ENCODE measurements at regions of chr19 and their contacts with region 1.

Region 1: GRCh38 chr19:16247353-16248182 is 49.9 kb downstream of the AP1M1 start:
- DNase-seq: peak; percentile 70 to 94 (median 84)
- ATAC-seq: peak; percentile 80
- H3K4me3 ChIP-seq: no peak overlapping the region
- H3K4me3 Mint-ChIP-seq: peak overlapping the region; percentile 60
- H3K27ac ChIP-seq: no peak overlapping the region
- H3K27ac Mint-ChIP-seq: peak overlapping the region; percentile 82
- H3K4me1 ChIP-seq: peaks cover 48% of the 10 kb centered on the region
- H3K4me1 Mint-ChIP-seq: peaks cover 32% of the 10 kb centered on the region
- H3K27me3 ChIP-seq: no peaks in the 10 kb centered on the region
- H3K27me3 Mint-ChIP-seq: no peaks in the 10 kb centered on the region
- CTCF ChIP-seq: peak; percentile 95

Region 2: GRCh38 chr19:15954820-15955219 is 292.7 kb before region 1 on chr19:
- CTCF ChIA-PET with region 1: no interaction called
- POLR2A ChIA-PET with region 1: no interaction called
- intact Hi-C with region 1: no loop called
- DNase-seq: no peak
- ATAC-seq: no peak
- H3K4me3 ChIP-seq: no peak overlapping the region
- H3K4me3 Mint-ChIP-seq: no peak overlapping the region
- H3K27ac ChIP-seq: no peak overlapping the region
- H3K27ac Mint-ChIP-seq: no peak overlapping the region
- H3K4me1 ChIP-seq: no peaks in the 10 kb centered on the region
- H3K4me1 Mint-ChIP-seq: no peaks in the 10 kb centered on the region
- H3K27me3 ChIP-seq: peaks cover 5 to 6% of the 10 kb centered on the region in 2 experiments
- H3K27me3 Mint-ChIP-seq: peaks cover 48% of the 10 kb centered on the region
- CTCF ChIP-seq: no peak

Region 3: DNA sequence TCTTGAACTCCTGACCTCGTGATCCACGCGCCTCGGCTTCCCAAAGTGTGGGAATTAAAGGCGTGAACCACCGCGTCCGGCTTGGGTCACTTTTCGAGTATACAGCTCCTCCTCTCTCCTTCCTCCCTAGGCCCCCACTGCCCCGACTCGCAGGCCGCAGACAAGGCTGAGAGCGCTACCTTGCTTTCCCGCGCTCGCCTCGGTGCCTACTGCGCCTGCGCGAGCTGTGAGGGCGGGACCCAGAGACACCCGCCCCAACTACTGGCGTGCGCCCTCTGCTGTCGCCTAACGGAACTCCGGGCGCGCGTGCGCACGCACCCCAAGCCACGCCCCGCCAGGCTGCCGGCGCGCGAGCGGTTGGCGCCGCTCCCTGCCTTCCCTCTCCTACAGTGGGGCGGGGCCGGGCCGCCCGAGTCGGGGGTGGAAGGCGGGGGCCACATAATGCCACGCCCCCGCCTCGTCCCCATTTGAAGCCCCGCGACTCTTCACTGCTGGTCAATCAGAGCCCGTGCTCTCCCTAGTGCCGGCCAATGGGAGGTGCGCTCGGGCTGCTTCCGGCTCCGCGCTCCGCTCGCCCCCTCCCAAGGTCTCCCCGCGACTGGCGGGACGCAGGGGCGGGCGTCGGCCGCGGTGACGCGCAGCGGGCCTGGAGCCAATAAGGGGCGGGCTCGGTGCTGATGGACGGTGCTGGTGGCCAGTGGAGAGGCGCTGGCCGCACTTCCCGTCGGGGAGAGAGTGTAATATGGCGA is 136.2 kb before region 1 on chr19 and contains the start of gene RAB8A:
- CTCF ChIA-PET with region 1: no interaction called
- POLR2A ChIA-PET with region 1: no interaction called
- intact Hi-C with region 1: no loop called
- DNase-seq: peak; percentile 98 to 100 (median 99)
- ATAC-seq: peak; percentile 87
- H3K4me3 ChIP-seq: peak within 1 kb of the TSS; percentile 98 to 100
- H3K4me3 Mint-ChIP-seq: peak within 1 kb of the TSS; percentile 97
- H3K27ac ChIP-seq: peak within 1 kb of the TSS; percentile 93 to 98
- H3K27ac Mint-ChIP-seq: peak within 1 kb of the TSS; percentile 98
- H3K4me1 ChIP-seq: peaks cover 41% of the 10 kb centered on the region
- H3K4me1 Mint-ChIP-seq: peaks cover 39% of the 10 kb centered on the region
- H3K27me3 ChIP-seq: no peaks in the 10 kb centered on the region
- H3K27me3 Mint-ChIP-seq: no peaks in the 10 kb centered on the region
- CTCF ChIP-seq: peak; percentile 84
- total RNA-seq, gene RAB8A: 79.1 to 88.4 TPM

Region 4: DNA sequence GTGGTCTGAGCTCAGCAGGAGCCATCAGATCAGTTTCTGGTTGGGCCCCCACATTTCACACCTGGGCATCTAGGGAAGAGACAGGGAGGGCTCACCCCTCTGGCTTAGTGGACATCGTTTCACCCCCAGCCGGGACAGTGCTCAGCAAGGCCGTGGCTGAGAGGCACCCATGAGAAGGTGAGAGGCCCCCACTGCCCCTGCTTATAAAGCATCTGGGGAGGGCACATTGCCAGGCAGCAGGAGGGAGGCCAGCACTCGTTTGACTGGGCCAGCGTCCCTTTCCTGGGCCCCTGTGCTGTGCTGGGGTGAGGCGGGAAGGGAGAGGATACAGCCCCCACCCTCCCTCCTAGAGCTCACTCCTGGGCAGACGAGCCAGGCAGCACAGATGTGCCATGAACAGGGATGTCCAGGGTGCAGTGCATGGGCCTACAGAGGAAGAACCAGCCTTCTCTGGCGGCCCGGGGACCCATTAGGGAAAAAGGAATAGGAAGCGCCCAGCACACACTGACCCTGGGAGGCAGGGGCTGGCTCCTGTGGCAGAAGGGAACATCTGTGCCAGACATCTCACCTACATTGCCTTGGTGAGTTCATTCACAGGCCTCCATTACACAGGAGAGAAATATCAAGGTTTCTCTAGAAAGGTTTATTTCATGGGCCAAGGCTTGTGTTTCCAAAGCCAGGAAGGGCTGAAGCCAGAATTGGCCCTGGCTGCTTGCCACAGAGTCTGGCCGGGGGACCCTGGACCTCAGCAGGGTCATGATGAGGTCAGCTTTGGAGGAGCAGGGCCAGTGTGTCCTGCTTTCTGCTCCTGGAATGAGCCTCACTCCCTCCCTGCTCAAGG is 42.1 kb before region 1 on chr19:
- CTCF ChIA-PET with region 1: interaction called, 11 read pairs
- POLR2A ChIA-PET with region 1: no interaction called
- intact Hi-C with region 1: loop called in 1 of 2 experiments (anchors 5 kb)
- DNase-seq: peak in 2 of 9 experiments; percentile 1 to 3
- ATAC-seq: no peak
- H3K4me3 ChIP-seq: no peak overlapping the region
- H3K4me3 Mint-ChIP-seq: no peak overlapping the region
- H3K27ac ChIP-seq: no peak overlapping the region
- H3K27ac Mint-ChIP-seq: peak overlapping the region; percentile 37
- H3K4me1 ChIP-seq: peaks cover 89% of the 10 kb centered on the region
- H3K4me1 Mint-ChIP-seq: peaks cover 73% of the 10 kb centered on the region
- H3K27me3 ChIP-seq: no peaks in the 10 kb centered on the region
- H3K27me3 Mint-ChIP-seq: no peaks in the 10 kb centered on the region
- CTCF ChIP-seq: no peak

Region 5: DNA sequence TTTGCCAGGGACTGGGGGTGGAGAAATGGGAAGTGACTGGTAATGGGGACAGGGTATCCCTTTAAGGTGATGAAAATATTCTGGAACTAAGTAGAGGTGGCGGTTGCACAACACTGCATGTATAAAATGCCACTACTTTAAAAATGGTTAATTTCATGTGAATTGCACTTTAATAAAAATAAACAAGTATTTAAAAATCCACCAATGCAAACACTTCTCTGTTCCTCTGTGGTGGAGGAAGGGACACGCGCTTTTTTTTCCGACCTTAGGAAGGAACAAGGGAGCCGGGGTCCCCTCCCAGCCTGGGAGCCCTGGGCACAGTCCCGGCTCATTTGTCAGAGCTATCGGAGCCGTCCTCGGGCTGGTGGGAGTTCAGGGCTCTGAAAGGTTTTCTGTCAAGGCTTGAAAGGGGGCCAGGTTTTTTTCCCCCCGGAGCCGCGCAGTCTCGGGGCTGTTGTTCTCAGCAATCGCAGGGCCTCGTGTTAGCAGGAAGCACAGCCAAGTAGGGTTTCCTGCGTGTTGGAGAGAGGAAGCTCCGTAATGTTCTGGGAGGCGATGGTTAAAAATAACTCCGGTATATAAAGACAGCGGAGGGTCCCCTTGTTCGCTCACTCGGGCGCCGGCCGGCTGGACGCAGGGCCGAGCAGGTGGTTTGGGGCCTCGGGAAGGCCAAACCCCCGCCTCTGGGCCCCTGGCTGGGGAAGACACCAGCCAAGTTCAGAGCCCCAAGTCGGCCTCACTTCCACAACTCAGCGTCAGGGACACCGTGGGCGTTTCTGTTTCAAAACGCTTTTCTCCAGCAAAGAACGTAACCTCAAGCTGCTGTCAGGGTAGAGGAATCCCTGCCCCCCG is 35.9 kb after region 1 on chr19:
- CTCF ChIA-PET with region 1: interaction called, 4 read pairs
- POLR2A ChIA-PET with region 1: no interaction called
- intact Hi-C with region 1: loop called (anchors 5 kb)
- DNase-seq: peak; percentile 24 to 79 (median 58)
- ATAC-seq: peak; percentile 88
- H3K4me3 ChIP-seq: peak overlapping the region; percentile 29 to 35
- H3K4me3 Mint-ChIP-seq: peak overlapping the region; percentile 66
- H3K27ac ChIP-seq: peak overlapping the region; percentile 41 to 70
- H3K27ac Mint-ChIP-seq: peak overlapping the region; percentile 84
- H3K4me1 ChIP-seq: peaks cover 34% of the 10 kb centered on the region
- H3K4me1 Mint-ChIP-seq: peaks cover 34% of the 10 kb centered on the region
- H3K27me3 ChIP-seq: no peaks in the 10 kb centered on the region
- H3K27me3 Mint-ChIP-seq: no peaks in the 10 kb centered on the region
- CTCF ChIP-seq: no peak

Region 6: DNA sequence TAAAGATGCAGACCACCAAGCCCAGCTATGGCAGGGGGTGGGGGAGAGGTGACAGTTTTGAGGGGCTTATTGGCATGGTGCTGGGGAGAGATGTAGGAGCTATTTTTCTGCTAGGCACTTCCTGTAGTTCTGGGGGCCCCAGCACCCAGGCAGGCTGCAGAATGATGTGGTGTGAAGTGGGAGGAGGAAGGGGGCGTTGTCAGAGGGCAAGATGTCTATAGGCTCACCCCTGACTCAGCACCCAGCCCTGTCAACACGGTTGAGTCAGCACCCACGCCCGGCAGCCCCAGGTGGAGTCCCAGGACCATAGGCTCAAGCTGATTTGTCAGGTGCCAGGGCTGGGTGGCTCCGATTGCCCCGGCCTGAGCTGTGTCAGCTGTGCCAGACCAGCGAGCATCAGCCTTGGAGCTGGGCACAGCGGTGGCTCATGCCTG is 82.8 kb after region 1 on chr19:
- CTCF ChIA-PET with region 1: interaction called, 41 read pairs
- POLR2A ChIA-PET with region 1: interaction called, 138 read pairs
- intact Hi-C with region 1: no loop called
- DNase-seq: peak; percentile 88 to 99 (median 95)
- ATAC-seq: peak; percentile 74
- H3K4me3 ChIP-seq: no peak overlapping the region
- H3K4me3 Mint-ChIP-seq: peak overlapping the region; percentile 59
- H3K27ac ChIP-seq: peak overlapping the region; percentile 93 to 99
- H3K27ac Mint-ChIP-seq: peak overlapping the region; percentile 96
- H3K4me1 ChIP-seq: peaks cover 36% of the 10 kb centered on the region
- H3K4me1 Mint-ChIP-seq: peaks cover 46% of the 10 kb centered on the region
- H3K27me3 ChIP-seq: no peaks in the 10 kb centered on the region
- H3K27me3 Mint-ChIP-seq: no peaks in the 10 kb centered on the region
- CTCF ChIP-seq: no peak

Region 7: GRCh38 chr19:16371540-16371986 is 124.0 kb after region 1 on chr19:
- CTCF ChIA-PET with region 1: interaction called, 44 read pairs
- POLR2A ChIA-PET with region 1: interaction called, 9 read pairs
- intact Hi-C with region 1: no loop called
- DNase-seq: peak; percentile 87 to 97 (median 92)
- ATAC-seq: peak; percentile 41
- H3K4me3 ChIP-seq: peak overlapping the region; percentile 33 to 44
- H3K4me3 Mint-ChIP-seq: no peak overlapping the region
- H3K27ac ChIP-seq: peak overlapping the region; percentile 91 to 95
- H3K27ac Mint-ChIP-seq: no peak overlapping the region
- H3K4me1 ChIP-seq: peaks cover 95% of the 10 kb centered on the region
- H3K4me1 Mint-ChIP-seq: peaks cover 68% of the 10 kb centered on the region
- H3K27me3 ChIP-seq: no peaks in the 10 kb centered on the region
- H3K27me3 Mint-ChIP-seq: no peaks in the 10 kb centered on the region
- CTCF ChIP-seq: no peak

Region 8: DNA sequence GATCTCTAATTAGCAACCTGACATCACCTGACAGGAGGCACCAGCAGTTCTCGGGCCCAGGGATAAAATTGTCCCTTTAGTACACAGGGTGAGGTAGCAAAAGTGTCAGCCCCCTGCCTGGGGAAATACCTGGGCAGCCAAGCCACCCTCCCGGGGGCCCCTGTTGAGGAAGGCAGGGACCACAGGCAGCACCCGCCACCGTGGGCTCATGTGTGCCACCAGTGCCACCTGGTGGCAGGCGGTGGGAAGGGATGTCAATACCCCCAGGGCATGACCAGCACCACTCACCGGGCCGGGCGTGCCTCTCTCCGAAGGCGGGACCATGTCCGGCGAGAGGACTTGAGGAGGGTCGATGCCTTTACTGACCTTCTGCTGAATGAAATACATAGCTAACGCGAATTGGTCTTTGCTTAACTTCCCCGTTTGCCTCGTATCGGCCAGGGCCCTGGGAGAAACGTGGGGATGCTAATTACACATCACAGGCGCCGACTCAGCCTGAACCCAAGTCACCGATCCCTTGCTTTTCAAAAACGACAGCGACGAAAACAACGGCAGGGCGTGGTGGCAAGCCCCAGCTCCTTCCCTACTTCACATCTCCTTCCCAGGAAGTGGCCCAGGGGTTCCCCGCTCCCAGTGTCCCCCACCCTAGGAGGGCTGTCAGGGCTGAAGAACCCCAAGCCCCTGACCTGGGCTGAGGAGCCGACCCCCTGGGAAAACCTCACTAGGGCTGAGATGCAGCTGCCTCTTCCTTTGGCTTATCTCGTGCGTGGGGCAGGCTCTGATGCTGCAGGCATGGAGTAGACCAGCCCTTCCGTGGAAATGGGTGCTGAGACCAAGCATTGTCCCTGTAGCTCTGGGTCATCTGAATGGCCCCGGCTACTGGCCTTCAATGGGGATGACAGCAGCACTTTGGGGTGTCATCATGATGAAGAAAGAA is 170.4 kb after region 1 on chr19:
- CTCF ChIA-PET with region 1: interaction called, 64 read pairs
- POLR2A ChIA-PET with region 1: no interaction called
- intact Hi-C with region 1: loop called (anchors 1 kb)
- DNase-seq: peak; percentile 54 to 84 (median 70)
- ATAC-seq: peak; percentile 99
- H3K4me3 ChIP-seq: no peak overlapping the region
- H3K4me3 Mint-ChIP-seq: no peak overlapping the region
- H3K27ac ChIP-seq: no peak overlapping the region
- H3K27ac Mint-ChIP-seq: peak overlapping the region; percentile 32
- H3K4me1 ChIP-seq: peaks cover 6% of the 10 kb centered on the region
- H3K4me1 Mint-ChIP-seq: peaks cover 9% of the 10 kb centered on the region
- H3K27me3 ChIP-seq: no peaks in the 10 kb centered on the region
- H3K27me3 Mint-ChIP-seq: no peaks in the 10 kb centered on the region
- CTCF ChIP-seq: peak; percentile 74